ENCODE measurements at regions of chr16 and their contacts with region 1.

Region 1: GRCh38 chr16:30710971-30711370 is 12.0 kb downstream of the SRCAP start:
- DNase-seq: no peak
- H3K4me3 ChIP-seq: no peak overlapping the region
- H3K27ac ChIP-seq: no peak overlapping the region
- H3K4me1 ChIP-seq: peaks cover 15% of the 10 kb centered on the region
- H3K27me3 ChIP-seq: no peaks in the 10 kb centered on the region
- CTCF ChIP-seq: no peak

Region 2: GRCh38 chr16:30355144-30355894 is 355.7 kb before region 1 on chr16 and contains the start of gene CD2BP2:
- CTCF ChIA-PET with region 1: no interaction called
- dilution Hi-C with region 1: no loop called
- in situ Hi-C with region 1: no loop called
- intact Hi-C with region 1: no loop called
- DNase-seq: peak; percentile 100
- H3K4me3 ChIP-seq: peak within 1 kb of the TSS; percentile 91 to 97 (median 95)
- H3K27ac ChIP-seq: peak within 1 kb of the TSS; percentile 84
- H3K4me1 ChIP-seq: peaks cover 17% of the 10 kb centered on the region
- H3K27me3 ChIP-seq: no peaks in the 10 kb centered on the region
- CTCF ChIP-seq: no peak
- total RNA-seq, gene CD2BP2: 38.3 to 55.2 TPM

Region 3: GRCh38 chr16:30637942-30638341 is 73.0 kb before region 1 on chr16:
- CTCF ChIA-PET with region 1: no interaction called
- dilution Hi-C with region 1: loop called (anchors 5 kb)
- in situ Hi-C with region 1: no loop called
- intact Hi-C with region 1: no loop called
- DNase-seq: peak; percentile 54
- H3K4me3 ChIP-seq: no peak overlapping the region
- H3K27ac ChIP-seq: no peak overlapping the region
- H3K4me1 ChIP-seq: no peaks in the 10 kb centered on the region
- H3K27me3 ChIP-seq: no peaks in the 10 kb centered on the region
- CTCF ChIP-seq: peak; percentile 55 to 74

Region 4: GRCh38 chr16:30893744-30894539 is 183.0 kb after region 1 on chr16 and contains the start of gene BCL7C:
- CTCF ChIA-PET with region 1: no interaction called
- dilution Hi-C with region 1: no loop called
- in situ Hi-C with region 1: no loop called
- intact Hi-C with region 1: no loop called
- DNase-seq: peak; percentile 87
- H3K4me3 ChIP-seq: peak within 1 kb of the TSS; percentile 54 to 86 (median 81)
- H3K27ac ChIP-seq: peak within 1 kb of the TSS; percentile 33
- H3K4me1 ChIP-seq: peaks cover 38% of the 10 kb centered on the region
- H3K27me3 ChIP-seq: no peaks in the 10 kb centered on the region
- CTCF ChIP-seq: peak; percentile 4 to 54
- total RNA-seq, gene BCL7C: 26.1 to 28.5 TPM

Measured in mammary epithelial cell (primary cell).